HepG2 (cell line): ENCODE measurements at regions of chr6 and their contacts with region 1.

Region 1: DNA sequence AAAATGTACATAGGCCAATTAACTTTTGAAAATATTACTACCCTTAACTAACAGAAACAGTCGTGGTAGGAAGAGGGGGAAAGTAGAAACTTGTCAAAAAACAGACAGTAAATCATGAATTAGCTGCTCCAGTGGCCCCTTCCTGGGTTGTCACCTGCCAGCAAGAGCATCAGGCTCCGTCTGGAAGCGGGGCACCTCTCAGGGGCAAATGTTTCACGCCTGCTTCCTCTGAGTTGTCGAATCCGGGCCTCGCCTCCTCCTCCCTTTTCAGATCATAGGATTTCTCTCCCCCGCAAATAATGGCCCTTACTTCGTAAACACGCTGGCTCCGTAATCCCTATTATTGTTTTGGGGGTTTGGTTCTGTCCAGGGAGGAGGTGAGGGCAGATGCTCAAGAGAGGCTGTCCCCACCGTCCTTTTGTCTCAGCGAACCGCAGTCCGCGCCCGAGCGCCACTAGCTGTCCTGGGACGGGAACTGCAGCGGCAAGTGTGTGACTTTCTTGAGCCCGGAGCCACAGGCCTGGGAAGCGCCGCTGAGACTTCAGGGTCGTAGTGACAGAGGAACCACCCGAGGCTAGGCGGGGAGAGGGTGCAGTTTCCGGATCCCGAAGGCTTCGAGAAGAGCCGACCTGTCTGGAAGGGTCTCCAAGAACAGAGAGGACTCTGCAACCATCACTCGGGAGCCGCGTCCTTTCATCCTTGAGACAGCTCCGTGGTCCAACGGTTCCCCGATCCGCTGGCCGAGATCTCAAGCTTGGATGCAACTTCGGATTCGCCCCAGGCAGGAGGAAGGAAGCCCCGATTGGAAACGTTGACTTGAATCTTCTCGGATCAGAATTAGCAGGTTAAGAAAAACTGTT is 214.5 kb upstream of the ZNF184 start:
- DNase-seq: peak; percentile 79
- ATAC-seq: peak; percentile 85
- H3K4me3 ChIP-seq: peak overlapping the region; percentile 65 to 93 (median 78)
- H3K27ac ChIP-seq: peak overlapping the region; percentile 15
- H3K4me1 ChIP-seq: peaks cover 56% of the 10 kb centered on the region
- H3K27me3 ChIP-seq: no peaks in the 10 kb centered on the region; a peak in 1 of 5 replicates
- CTCF ChIP-seq: peak; percentile 95
- EP300 ChIP-seq: no peak
- POLR2A ChIP-seq: no peak
- RAD21 ChIP-seq: peak; percentile 70

Region 2: DNA sequence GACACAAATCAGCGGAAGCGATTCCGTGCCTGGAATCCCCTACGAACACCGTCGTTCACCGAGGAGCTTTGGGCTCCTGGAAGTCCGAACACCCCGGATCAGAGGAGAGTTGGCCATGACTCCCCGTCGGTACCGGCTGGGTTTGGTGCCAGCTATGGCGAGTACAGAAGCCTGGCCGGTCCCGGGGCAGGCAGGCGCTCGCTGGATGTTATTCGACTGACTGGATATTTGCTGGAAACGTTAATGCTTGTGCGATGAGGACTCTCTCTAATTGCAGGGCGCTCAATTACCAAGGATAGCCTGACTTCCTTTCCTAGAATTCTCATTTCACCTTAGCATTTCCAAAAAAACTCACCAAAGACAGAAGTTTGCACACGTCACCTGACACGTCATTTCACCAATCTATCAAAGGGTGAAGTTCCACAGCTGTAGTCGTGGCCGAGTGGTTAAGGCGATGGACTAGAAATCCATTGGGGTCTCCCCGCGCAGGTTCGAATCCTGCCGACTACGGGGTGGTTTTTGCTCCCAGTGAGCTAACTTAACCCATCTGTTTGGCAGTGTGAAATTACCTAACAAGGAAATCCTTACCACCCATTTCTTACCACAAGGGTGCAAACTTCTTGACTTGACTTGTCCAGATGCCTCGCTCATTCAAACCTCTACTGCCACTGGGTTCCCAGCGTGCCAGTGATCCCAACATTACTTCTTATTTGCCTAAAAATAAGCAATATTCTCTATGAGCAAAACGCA is 191.8 kb before region 1 on chr6:
- CTCF ChIA-PET with region 1: no interaction called
- POLR2A ChIA-PET with region 1: no interaction called
- in situ Hi-C with region 1: no loop called
- intact Hi-C with region 1: no loop called
- DNase-seq: peak; percentile 80
- ATAC-seq: peak; percentile 85
- H3K4me3 ChIP-seq: peak overlapping the region; percentile 69 to 87 (median 86)
- H3K27ac ChIP-seq: no peak overlapping the region
- H3K4me1 ChIP-seq: peaks cover 28% of the 10 kb centered on the region
- H3K27me3 ChIP-seq: peaks cover 0 to 9% of the 10 kb centered on the region in 2 experiments; a peak in 1 of 5 replicates
- CTCF ChIP-seq: peak; percentile 31
- EP300 ChIP-seq: 0 out of 4 replicates have a peak, but pooled peaks of 1 of the 2 experiments have one; percentile 34
- POLR2A ChIP-seq: no peak
- RAD21 ChIP-seq: no peak

Region 3: GRCh38 chr6:27592481-27593199 is 94.7 kb before region 1 on chr6:
- CTCF ChIA-PET with region 1: no interaction called
- POLR2A ChIA-PET with region 1: no interaction called
- in situ Hi-C with region 1: no loop called
- intact Hi-C with region 1: loop called (anchors 10 kb)
- DNase-seq: peak; percentile 84
- ATAC-seq: peak; percentile 96
- H3K4me3 ChIP-seq: peak overlapping the region; percentile 58 to 76 (median 74)
- H3K27ac ChIP-seq: no peak overlapping the region
- H3K4me1 ChIP-seq: peaks cover 37% of the 10 kb centered on the region
- H3K27me3 ChIP-seq: peaks cover 0 to 22% of the 10 kb centered on the region in 2 experiments; a peak in 1 of 5 replicates
- CTCF ChIP-seq: no peak
- EP300 ChIP-seq: 0 out of 4 replicates have a peak, but pooled peaks of 1 of the 2 experiments have one; percentile 29
- POLR2A ChIP-seq: no peak
- RAD21 ChIP-seq: no peak

Region 4: GRCh38 chr6:27977387-27977786 is 290.0 kb after region 1 on chr6:
- CTCF ChIA-PET with region 1: no interaction called
- POLR2A ChIA-PET with region 1: no interaction called
- in situ Hi-C with region 1: no loop called
- intact Hi-C with region 1: no loop called
- DNase-seq: no peak
- ATAC-seq: no peak
- H3K4me3 ChIP-seq: no peak overlapping the region
- H3K27ac ChIP-seq: no peak overlapping the region
- H3K4me1 ChIP-seq: no peaks in the 10 kb centered on the region
- H3K27me3 ChIP-seq: no peaks in the 10 kb centered on the region
- CTCF ChIP-seq: no peak
- EP300 ChIP-seq: no peak
- POLR2A ChIP-seq: no peak
- RAD21 ChIP-seq: no peak